Activated T-helper 1 cell treated with anti-CD3 and anti-CD28 coated beads, Interleukin-12 subunit alpha, Interleukin-12 subunit beta, Interleukin-2, Interleukin-4 antibody, amounts not matched to agents 30 ng/mL and 10 ng/mL and 1 ng/mL, durations not matched to agents 14 hours and 24 hours and 36 hours (primary cell): ENCODE measurements at regions of chr5 and their contacts with region 1.

Region 1: DNA sequence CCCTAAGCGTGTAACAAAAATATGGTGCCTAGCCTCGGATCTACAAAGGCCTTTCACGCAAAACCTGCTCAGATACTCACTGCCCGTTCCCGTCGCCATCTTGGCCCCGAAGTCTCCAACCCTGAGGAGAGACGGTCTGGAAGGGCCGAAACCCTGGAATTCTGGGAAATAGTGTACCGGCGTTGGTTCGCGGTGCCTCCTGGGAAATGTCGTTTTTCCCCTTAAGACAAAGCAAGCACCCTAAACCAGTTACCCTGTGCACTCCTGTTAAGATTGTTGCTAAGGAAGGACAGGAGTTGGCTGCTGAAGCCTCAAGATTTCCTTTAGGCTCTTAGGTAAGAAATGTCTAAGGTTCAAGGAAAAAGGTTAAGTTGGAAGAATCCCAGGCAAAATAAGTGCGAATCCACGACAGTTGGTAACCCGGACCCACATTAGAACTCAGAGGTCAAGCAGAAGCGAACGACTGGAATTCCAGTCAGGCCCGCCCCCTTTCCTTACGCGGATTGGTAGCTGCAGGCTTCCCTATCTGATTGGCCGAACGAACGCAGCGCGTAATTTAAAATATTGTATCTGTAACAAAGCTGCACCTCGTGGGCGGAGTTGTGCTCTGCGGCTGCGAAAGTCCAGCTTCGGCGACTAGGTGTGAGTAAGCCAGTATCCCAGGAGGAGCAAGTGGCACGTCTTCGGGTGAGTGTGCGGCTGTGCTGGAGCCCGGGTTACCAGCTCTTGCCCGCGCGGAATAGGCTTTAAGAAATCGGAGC is at the starts of genes BRD8 and KIF20A:
- DNase-seq: peak; percentile 87
- H3K4me3 Mint-ChIP-seq: no peak within 1 kb of the TSS
- H3K27ac Mint-ChIP-seq: peak within 1 kb of the TSS; percentile 61
- H3K4me1 Mint-ChIP-seq: peaks cover 11% of the 10 kb centered on the region
- H3K27me3 Mint-ChIP-seq: no peaks in the 10 kb centered on the region
- total RNA-seq, gene BRD8: 51.8 and 57.9 TPM in 2 replicates
- total RNA-seq, gene KIF20A: 17.4 and 18.8 TPM in 2 replicates

Region 2: DNA sequence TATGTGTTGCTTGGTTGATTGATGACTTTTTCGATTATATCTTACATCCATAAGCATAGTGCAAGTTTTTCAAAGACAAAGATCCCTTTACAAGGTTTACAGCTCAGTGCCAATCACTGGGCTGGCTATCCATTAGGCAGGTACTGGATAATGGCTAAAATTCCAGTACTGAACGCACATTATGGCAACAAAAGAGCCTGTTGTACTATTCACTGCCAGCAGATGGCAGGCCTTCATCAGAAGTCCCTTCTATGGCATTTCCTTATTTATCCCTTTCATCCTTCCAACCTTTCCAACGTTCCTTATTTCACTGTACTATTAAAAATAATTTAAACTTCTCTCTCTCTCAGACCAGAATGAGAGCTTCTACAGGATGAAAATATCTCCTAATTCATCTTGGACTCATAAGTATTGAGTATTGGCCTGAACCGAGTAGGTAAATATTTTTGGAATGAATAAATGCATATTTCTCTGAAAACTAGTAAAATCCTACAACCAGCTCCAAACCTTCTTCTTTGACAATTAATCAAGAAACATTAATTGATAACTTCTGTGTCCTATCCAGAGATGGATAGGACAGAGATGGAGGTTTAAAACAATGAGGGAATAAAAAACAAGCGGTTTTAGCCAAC is 101.5 kb before region 1 on chr5:
- intact Hi-C with region 1: loop called (anchors 1 kb)
- DNase-seq: no peak
- H3K4me3 Mint-ChIP-seq: no peak overlapping the region
- H3K27ac Mint-ChIP-seq: no peak overlapping the region
- H3K4me1 Mint-ChIP-seq: peaks cover 13% of the 10 kb centered on the region
- H3K27me3 Mint-ChIP-seq: peaks cover 4% of the 10 kb centered on the region

Region 3: GRCh38 chr5:138331449-138332368 is 153.0 kb after region 1 on chr5 and contains the start of gene CDC25C:
- intact Hi-C with region 1: loop called (anchors 1 kb)
- DNase-seq: peak; percentile 97
- H3K4me3 Mint-ChIP-seq: peak within 1 kb of the TSS; percentile 85
- H3K27ac Mint-ChIP-seq: peak within 1 kb of the TSS; percentile 82
- H3K4me1 Mint-ChIP-seq: peaks cover 24% of the 10 kb centered on the region
- H3K27me3 Mint-ChIP-seq: no peaks in the 10 kb centered on the region
- total RNA-seq, gene CDC25C: 5.3 and 5.6 TPM in 2 replicates

Region 4: GRCh38 chr5:138408023-138408422 is 229.3 kb after region 1 on chr5:
- intact Hi-C with region 1: loop called (anchors 1 kb)
- DNase-seq: peak; percentile 15
- H3K4me3 Mint-ChIP-seq: no peak overlapping the region
- H3K27ac Mint-ChIP-seq: peak overlapping the region; percentile 40
- H3K4me1 Mint-ChIP-seq: peaks cover 20% of the 10 kb centered on the region
- H3K27me3 Mint-ChIP-seq: no peaks in the 10 kb centered on the region

Region 5: DNA sequence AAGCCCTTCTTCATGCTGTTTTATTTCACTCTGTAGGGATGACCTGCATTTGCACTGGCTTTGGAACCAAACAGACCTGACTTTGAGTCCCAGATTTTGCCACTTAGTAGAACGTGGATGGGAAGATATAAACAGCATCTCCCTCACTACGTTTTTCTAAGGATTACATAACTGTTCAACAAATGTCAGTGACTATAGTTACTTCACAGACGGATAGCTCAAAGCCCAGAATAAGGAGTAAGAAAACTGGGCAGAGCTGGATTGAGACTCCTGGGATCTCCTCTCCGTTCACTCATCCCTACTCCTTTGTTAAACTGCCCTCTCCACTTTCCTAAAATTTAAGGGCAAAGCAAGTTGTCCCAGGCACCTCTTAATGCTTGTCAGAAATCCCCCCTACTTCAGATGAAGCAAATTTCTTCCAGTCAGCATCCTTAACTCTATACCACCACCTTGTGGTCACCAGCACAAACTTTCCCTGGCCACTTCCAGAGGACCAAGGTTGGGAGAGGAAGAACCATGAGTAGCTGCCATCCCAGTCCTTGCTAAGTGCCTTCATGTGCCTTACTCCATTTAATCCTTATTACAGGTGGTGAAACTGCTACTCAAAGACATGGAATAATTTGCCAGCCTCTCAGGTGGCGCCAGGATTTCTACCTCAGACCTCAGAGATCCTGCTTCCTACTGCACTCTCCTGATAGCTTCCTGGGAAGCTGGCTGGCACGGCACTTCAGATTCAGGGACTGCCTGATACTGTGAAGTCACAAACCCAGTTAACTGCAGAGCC is 325.0 kb after region 1 on chr5:
- intact Hi-C with region 1: loop called (anchors 1 kb)
- DNase-seq: no peak
- H3K4me3 Mint-ChIP-seq: no peak overlapping the region
- H3K27ac Mint-ChIP-seq: no peak overlapping the region
- H3K4me1 Mint-ChIP-seq: peaks cover 5% of the 10 kb centered on the region
- H3K27me3 Mint-ChIP-seq: no peaks in the 10 kb centered on the region

Region 6: DNA sequence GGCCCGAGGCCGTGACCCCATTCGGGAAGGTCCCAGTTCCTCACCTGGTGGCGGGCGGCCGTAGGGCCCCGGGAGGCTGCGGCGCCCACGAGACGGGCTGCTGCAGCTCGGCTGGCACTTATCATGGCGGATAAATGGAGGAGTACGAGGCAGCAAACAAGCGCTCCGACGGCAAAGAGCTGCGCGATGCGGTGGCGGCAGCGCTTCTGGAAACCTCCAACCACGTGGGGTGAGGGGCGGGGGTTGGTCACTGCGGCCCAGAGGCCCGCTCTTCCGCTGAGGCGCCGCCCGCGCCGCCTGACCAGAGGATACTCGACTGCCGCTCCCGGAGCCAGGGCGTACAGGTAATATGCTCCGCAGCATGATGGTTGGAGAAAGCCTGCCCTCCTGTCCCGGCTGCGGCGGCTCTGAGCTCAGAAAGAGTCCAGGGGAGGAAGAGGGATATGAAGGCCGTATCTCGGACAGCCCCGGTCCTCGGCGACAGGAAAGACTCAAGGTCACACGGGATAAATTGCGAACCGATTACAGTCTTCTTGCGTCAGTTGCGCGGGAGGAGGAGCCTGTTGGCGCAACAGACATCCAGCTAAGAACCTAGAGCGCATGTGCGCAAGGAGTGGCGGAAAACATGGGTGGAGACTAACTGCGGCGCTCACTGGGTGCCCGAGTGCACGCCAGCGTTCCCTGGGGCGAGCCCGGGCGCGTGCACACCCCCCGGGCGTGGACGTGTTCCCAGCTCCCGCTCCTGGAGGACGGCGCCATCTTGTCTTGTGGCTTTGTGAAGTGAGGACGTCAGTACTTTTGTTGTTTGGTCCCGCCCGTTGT is 396.7 kb after region 1 on chr5 and contains the start of gene HSPA9:
- intact Hi-C with region 1: loop called (anchors 1 kb)
- DNase-seq: peak; percentile 97
- H3K4me3 Mint-ChIP-seq: peak within 1 kb of the TSS; percentile 95
- H3K27ac Mint-ChIP-seq: peak within 1 kb of the TSS; percentile 100
- H3K4me1 Mint-ChIP-seq: peaks cover 22% of the 10 kb centered on the region
- H3K27me3 Mint-ChIP-seq: no peaks in the 10 kb centered on the region
- total RNA-seq, gene HSPA9: 372 and 383 TPM in 2 replicates